ENCODE measurements at regions of chr6 and their contacts with region 1.

Region 1: DNA sequence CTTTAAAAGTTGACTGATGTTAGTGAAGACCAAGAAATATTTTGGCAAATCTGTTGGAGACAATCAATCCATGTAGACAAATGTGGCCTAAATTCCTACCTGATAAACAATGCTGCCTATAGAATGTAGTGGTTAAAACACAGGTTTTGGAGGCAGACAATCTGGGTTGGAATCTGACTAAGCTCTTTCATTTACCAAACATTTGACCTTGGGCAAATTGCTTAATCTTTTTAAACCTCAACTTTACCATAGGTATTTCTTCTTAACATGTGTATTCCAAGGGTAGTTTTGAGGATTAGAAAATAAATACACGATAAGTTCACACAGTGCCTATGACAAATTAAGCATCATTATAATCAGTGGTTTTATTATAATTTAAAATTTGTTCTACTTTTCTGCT is 11.5 kb downstream of the RHAG start:
- DNase-seq: no peak
- H3K4me3 ChIP-seq: no peak overlapping the region
- CTCF ChIP-seq: no peak

Region 2: GRCh38 chr6:49849213-49849907 is 224.2 kb after region 1 on chr6:
- CTCF ChIA-PET with region 1: interaction called, 19 read pairs
- POLR2A ChIA-PET with region 1: no interaction called
- DNase-seq: peak; percentile 10
- H3K4me3 ChIP-seq: no peak overlapping the region
- CTCF ChIP-seq: peak; percentile 26